B cell (primary cell): ENCODE measurements at regions of chr4 and their contacts with region 1.

Region 1: DNA sequence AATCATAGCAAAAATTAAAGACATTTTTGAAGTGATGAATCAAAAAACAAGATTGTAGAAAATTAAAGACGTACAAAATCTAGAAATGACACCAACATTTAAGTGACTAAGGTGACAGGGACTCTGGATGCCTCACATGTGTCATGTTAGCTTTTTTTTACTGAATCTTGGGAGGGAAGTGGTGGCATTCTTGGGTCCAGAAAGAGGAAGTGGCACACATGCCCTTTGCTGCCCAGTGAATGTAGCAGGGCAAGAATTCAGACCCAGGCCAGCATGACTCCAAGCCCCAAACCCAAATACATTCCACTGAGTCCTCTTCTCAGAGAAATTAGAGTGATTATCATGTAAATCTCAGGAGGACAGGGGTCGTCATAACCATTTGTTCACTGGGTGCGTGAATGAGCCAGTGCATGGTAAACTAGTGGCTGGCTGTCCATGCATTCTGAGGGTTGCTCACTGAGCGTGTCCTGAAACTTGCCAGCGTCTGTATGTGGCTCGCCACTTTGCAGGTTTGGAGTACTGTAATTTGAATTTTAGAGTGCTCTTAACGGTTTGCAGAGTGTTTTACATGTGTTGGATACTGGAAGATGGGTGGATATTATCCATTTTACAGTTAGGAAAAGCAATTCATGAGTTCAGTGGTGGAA is 55.4 kb upstream of the TBC1D14 start:
- DNase-seq: peak; percentile 19
- ATAC-seq: peak; percentile 36
- H3K4me3 ChIP-seq: no peak overlapping the region
- H3K4me3 Mint-ChIP-seq: no peak overlapping the region
- H3K27ac ChIP-seq: no peak overlapping the region
- H3K27ac Mint-ChIP-seq: no peak overlapping the region
- H3K4me1 ChIP-seq: peaks cover 8 to 10% of the 10 kb centered on the region in 2 donors
- H3K4me1 Mint-ChIP-seq: peaks cover 24% of the 10 kb centered on the region
- H3K27me3 ChIP-seq: no peaks in the 10 kb centered on the region
- H3K27me3 Mint-ChIP-seq: no peaks in the 10 kb centered on the region
- CTCF ChIP-seq: no peak

Region 2: GRCh38 chr4:6795821-6796220 is 58.4 kb before region 1 on chr4:
- CTCF ChIA-PET with region 1: no interaction called
- POLR2A ChIA-PET with region 1: no interaction called
- intact Hi-C with region 1: loop called (anchors 5 kb)
- DNase-seq: no peak
- ATAC-seq: no peak
- H3K4me3 ChIP-seq: no peak overlapping the region
- H3K4me3 Mint-ChIP-seq: no peak overlapping the region
- H3K27ac ChIP-seq: no peak overlapping the region
- H3K27ac Mint-ChIP-seq: no peak overlapping the region
- H3K4me1 ChIP-seq: peaks cover 0 to 6% of the 10 kb centered on the region in 2 donors
- H3K4me1 Mint-ChIP-seq: peaks cover 26% of the 10 kb centered on the region
- H3K27me3 ChIP-seq: no peaks in the 10 kb centered on the region
- H3K27me3 Mint-ChIP-seq: no peaks in the 10 kb centered on the region
- CTCF ChIP-seq: no peak

Region 3: DNA sequence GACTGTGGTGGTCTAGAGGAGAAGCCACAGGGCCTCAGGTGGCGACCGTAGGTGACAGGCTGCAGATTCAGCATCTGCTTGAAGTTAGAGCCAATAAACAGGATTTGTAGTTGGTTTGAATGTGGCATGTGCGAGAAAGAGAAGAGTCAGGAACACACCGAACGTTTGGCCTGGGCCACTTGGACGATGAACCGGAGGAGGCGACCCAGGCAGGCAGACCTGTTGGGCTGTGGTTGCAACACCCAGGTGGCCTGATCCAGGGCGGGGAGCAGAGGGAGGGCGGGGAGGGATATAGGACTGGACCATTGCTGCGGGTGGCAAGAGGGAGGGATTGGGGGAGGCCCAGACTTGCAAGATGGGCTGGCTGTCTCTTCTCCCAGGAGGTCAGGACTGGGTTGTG is 590.5 kb after region 1 on chr4:
- CTCF ChIA-PET with region 1: no interaction called
- POLR2A ChIA-PET with region 1: no interaction called
- intact Hi-C with region 1: no loop called
- DNase-seq: no peak
- ATAC-seq: no peak
- H3K4me3 ChIP-seq: no peak overlapping the region
- H3K4me3 Mint-ChIP-seq: no peak overlapping the region
- H3K27ac ChIP-seq: no peak overlapping the region
- H3K27ac Mint-ChIP-seq: no peak overlapping the region
- H3K4me1 ChIP-seq: no peaks in the 10 kb centered on the region
- H3K4me1 Mint-ChIP-seq: no peaks in the 10 kb centered on the region
- H3K27me3 ChIP-seq: peaks cover 0 to 2% (median 0%) of the 10 kb centered on the region in 4 experiments
- H3K27me3 Mint-ChIP-seq: peaks cover 12% of the 10 kb centered on the region
- CTCF ChIP-seq: no peak